ENCODE measurements at regions of chr17 and their contacts with region 1.

Region 1: DNA sequence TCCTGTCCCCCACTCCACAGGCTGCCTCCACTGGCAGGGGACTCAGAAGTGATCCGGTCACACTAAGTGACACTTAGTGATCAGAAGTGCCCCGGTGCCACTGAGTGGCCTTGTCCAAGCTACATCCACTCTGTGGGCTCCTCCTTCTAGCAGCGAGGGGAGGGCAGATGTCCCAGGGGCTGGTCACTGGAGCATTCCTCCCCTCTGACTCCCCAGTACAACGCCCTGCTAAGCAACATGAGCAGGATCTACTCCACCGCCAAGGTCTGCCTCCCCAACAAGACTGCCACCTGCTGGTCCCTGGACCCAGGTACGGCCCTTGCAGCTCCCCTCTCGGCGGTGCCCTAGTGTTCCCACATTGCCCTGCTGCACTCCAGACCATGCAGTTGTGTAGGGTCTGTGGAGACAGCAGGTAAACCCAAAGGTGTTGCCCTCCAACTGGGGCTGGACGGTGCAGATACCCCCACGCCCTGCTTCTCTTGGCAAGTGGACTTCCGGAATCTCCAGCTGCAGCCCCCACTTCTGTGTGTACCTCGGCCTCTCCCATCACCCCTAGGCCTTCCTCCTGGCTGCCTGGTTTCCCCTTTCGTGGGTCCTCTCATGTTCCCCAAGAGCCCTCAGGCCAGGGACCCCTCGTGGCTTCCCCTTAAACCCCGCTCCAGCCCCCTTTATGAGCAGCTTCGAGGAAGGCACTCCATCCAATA is 2.1 kb downstream of the ACE start:
- DNase-seq: peak; percentile 81
- ATAC-seq: peak; percentile 79
- H3K4me3 ChIP-seq: no peak overlapping the region
- H3K4me3 Mint-ChIP-seq: peak overlapping the region; percentile 71
- H3K27ac ChIP-seq: no peak overlapping the region
- H3K27ac Mint-ChIP-seq: no peak overlapping the region
- H3K4me1 ChIP-seq: peaks cover 20% of the 10 kb centered on the region in 2 donors
- H3K4me1 Mint-ChIP-seq: peaks cover 24% of the 10 kb centered on the region
- H3K27me3 ChIP-seq: peaks cover 0 to 46% (median 13%) of the 10 kb centered on the region in 4 experiments
- H3K27me3 Mint-ChIP-seq: peaks cover 35% of the 10 kb centered on the region
- CTCF ChIP-seq: peak; percentile 78

Region 2: GRCh38 chr17:63419949-63420867 is 58.7 kb before region 1 on chr17:
- CTCF ChIA-PET with region 1: interaction called, 158 read pairs
- POLR2A ChIA-PET with region 1: no interaction called
- intact Hi-C with region 1: no loop called
- DNase-seq: no peak
- ATAC-seq: no peak
- H3K4me3 ChIP-seq: no peak overlapping the region
- H3K4me3 Mint-ChIP-seq: no peak overlapping the region
- H3K27ac ChIP-seq: no peak overlapping the region
- H3K27ac Mint-ChIP-seq: no peak overlapping the region
- H3K4me1 ChIP-seq: peaks cover 0 to 2% of the 10 kb centered on the region in 2 donors
- H3K4me1 Mint-ChIP-seq: no peaks in the 10 kb centered on the region
- H3K27me3 ChIP-seq: no peaks in the 10 kb centered on the region
- H3K27me3 Mint-ChIP-seq: peaks cover 4% of the 10 kb centered on the region
- CTCF ChIP-seq: no peak

Region 3: DNA sequence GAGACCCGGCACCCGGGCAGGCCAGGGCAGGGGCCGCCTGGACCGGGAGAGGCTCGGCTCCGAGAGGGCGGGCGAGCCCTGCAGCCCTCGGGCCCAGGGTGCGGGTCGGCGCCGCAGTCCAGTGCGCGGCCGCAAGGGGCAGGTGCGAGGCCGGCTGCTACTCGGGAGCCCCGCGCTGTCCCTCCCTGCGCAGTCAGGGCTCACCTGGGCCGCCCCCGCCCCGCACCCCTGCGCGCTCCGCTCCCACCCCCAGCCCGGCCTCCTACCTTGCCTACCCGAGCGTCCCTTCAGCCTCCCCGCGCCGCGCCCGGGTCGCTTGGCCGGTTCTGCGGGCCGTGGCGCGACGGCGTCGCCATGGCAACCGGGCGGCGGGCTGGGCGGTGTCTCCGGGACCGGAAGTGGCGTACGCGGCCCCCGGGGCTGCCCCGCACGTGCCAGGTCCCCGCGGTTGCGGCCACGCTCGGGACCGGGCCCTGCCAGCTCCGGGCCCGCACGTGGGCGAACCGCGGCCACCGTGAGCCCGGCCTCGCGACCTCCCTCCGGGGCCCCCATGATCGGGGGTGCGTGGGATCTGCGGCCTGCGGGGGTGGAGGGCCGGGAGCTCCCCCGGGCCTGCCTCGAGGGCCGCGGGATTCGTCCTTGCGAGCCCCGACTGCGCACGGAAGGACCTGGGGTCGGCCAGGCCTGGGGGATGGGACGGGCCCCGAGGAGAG is 32.8 kb before region 1 on chr17 and contains the start of gene CYB561:
- CTCF ChIA-PET with region 1: interaction called, 13 read pairs
- POLR2A ChIA-PET with region 1: no interaction called
- intact Hi-C with region 1: loop called (anchors 1 kb)
- DNase-seq: peak; percentile 94
- ATAC-seq: peak; percentile 73
- H3K4me3 ChIP-seq: peak within 1 kb of the TSS in 4 of 5 experiments; percentile 54 to 70 (median 61)
- H3K4me3 Mint-ChIP-seq: peak within 1 kb of the TSS; percentile 77
- H3K27ac ChIP-seq: peak within 1 kb of the TSS; percentile 38 to 79
- H3K27ac Mint-ChIP-seq: peak within 1 kb of the TSS; percentile 81
- H3K4me1 ChIP-seq: peaks cover 13 to 24% of the 10 kb centered on the region in 2 donors
- H3K4me1 Mint-ChIP-seq: peaks cover 15% of the 10 kb centered on the region
- H3K27me3 ChIP-seq: peaks cover 0 to 2% (median 0%) of the 10 kb centered on the region in 4 experiments
- H3K27me3 Mint-ChIP-seq: peaks cover 6% of the 10 kb centered on the region
- CTCF ChIP-seq: peak; percentile 59
- total RNA-seq, gene CYB561: 3.6 and 4.9 TPM in 2 replicates